A549 (cell line): ENCODE measurements at regions of chr15 and their contacts with region 1.

Region 1: DNA sequence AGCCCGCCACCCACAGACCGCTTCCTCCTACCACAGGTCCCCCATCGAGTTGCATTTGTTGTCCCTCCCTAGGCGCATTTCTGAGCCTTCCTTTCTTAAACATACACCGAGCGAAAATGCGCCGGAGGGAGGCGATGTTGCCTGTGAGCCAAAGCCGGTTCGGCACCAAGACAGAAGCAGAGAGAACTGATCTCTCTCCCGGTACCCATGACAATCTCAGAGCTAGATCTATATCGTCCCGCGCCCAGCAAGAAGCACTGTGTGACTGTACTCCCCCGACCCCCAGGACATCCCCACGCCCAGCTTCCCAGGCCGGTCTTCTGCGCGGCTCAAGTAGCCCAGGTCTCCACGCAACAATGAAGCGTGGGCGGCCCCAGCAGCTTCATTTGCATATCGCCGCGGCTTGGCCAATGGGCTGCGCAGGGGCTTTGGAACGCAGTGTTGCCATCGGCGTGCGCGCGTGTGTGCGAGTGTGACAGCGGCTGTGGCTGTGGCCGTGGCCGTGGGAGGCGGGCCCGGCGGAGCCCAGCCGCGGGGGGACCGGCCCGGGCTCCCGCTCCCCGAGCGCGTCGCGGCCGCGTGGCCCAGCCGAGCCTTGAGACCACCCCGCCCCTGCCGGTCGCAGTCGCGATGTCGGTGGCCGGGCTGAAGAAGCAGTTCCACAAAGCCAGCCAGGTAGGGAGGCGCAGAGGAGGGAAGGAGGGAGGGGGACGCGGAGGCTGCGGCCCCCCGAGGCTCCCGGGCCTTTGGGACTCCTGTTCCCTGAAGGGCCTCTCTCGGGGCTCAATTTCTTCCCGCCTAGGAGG is at the start of gene SH3GL3:
- DNase-seq: peak; percentile 63 to 73
- ATAC-seq: peak; percentile 87 to 93
- H3K4me3 ChIP-seq: peak within 1 kb of the TSS; percentile 64
- H3K27ac ChIP-seq: peak within 1 kb of the TSS in 1 of 2 experiments; percentile 56; a peak in 3 of 6 replicates
- H3K4me1 ChIP-seq: 0 out of 3 replicates have a peak, but pooled peaks cover 4% of the 10 kb centered on the region
- CTCF ChIP-seq: peak; percentile 55
- EP300 ChIP-seq: no peak
- POLR2A ChIP-seq: no peak
- RAD21 ChIP-seq: peak; percentile 50 to 56; a peak in 4 of 5 replicates
- polyA plus RNA-seq, gene SH3GL3: 0.19 TPM in 1 of 2 replicates, not detected in the other

Region 2: GRCh38 chr15:82789491-82789890 is 657.6 kb before region 1 on chr15:
- CTCF ChIA-PET with region 1: no interaction called
- POLR2A ChIA-PET with region 1: no interaction called
- DNase-seq: no peak
- ATAC-seq: no peak
- H3K4me3 ChIP-seq: no peak overlapping the region
- H3K27ac ChIP-seq: no peak overlapping the region
- H3K4me1 ChIP-seq: no peaks in the 10 kb centered on the region
- CTCF ChIP-seq: no peak
- EP300 ChIP-seq: no peak
- POLR2A ChIP-seq: no peak
- RAD21 ChIP-seq: no peak

Region 3: DNA sequence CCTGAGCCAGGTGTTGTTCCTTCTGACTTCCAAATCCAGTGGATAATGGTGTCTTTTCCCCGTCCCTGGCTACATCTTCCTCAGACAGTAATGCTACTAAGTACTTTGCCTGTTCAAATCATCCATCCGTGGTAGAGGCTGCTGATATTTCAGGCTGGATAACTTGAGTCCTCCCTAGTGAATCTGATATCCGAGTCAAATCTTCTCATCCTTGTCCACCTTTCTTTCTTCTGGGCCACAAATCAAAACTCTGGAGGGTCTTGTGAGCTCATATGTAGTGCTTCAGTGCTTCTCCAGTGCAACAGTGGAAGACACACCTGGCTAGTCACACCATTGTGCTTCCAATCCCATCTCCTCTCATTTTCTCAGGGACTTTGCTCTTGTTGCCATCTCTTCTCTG is 11.3 kb after region 1 on chr15:
- CTCF ChIA-PET with region 1: interaction called, 11 read pairs
- POLR2A ChIA-PET with region 1: no interaction called
- DNase-seq: no peak
- ATAC-seq: no peak
- H3K4me3 ChIP-seq: no peak overlapping the region
- H3K27ac ChIP-seq: no peak overlapping the region
- H3K4me1 ChIP-seq: no peaks in the 10 kb centered on the region
- CTCF ChIP-seq: no peak
- EP300 ChIP-seq: no peak
- POLR2A ChIP-seq: no peak
- RAD21 ChIP-seq: no peak

Region 4: GRCh38 chr15:83559310-83559966 is 112.3 kb after region 1 on chr15:
- CTCF ChIA-PET with region 1: interaction called, 54 read pairs
- POLR2A ChIA-PET with region 1: no interaction called
- DNase-seq: peak; percentile 70 to 76
- ATAC-seq: peak; percentile 86 to 98
- H3K4me3 ChIP-seq: no peak overlapping the region
- H3K27ac ChIP-seq: no peak overlapping the region
- H3K4me1 ChIP-seq: no peaks in the 10 kb centered on the region
- CTCF ChIP-seq: peak; percentile 94
- EP300 ChIP-seq: no peak
- POLR2A ChIP-seq: no peak
- RAD21 ChIP-seq: peak; percentile 92 to 95